Activated T-helper 2 cell treated with anti-CD3 and anti-CD28 coated beads, Interferon-gamma antibody, Interleukin-2, Interleukin-4, amounts not matched to agents 10 μg/mL and 5 μg/mL and 100 μg/mL, durations not matched to agents 14 hours and 24 hours and 36 hours (primary cell): ENCODE measurements at regions of chr12 and their contacts with region 1.

Region 1: DNA sequence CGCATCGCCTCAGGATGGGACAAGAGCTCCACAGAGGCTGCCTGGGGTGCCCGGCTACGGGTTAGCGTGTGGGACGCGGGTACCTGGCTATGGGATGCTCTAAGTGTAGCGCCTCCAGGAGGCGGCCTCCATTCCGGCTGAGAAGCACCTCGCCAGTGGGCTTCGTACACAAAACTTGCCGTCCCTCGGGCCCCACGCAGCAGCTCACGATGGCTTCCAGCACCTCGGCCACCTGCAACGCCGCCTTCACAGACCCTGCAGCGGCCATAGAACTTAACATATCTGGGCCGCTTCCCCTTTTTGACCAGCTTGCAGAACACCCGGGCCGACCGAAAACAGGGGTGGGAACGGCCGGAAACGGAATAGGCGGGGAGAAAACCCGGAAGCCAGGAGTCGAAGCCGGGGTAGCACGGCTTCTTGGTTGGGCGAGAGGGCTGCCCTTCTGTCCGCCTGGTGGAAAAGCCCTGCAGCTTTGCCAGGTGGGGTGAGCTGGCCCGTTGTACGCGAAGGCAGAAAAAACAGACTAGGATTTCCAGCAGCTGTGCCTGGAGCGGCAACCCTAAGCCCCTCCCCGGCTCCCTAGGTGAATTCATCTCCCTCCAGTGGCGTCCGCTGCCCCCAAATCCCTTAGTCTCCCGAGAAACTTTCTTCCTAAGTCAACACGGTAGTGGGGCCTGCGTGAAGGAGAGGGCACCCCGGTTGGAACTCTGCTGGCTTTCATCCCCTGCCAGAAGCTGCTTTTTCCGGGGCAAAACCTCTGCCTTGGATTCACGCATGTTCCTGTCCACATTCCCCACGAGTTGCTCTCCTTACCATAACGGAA is at the start of gene BBS10:
- DNase-seq: peak; percentile 80
- H3K4me3 Mint-ChIP-seq: peak within 1 kb of the TSS; percentile 89
- H3K27ac Mint-ChIP-seq: peak within 1 kb of the TSS; percentile 84
- H3K4me1 Mint-ChIP-seq: peaks cover 21% of the 10 kb centered on the region
- H3K27me3 Mint-ChIP-seq: no peaks in the 10 kb centered on the region
- total RNA-seq, gene BBS10: 3.9 and 4.1 TPM in 2 replicates

Region 2: GRCh38 chr12:75480469-75480949 is 867.8 kb before region 1 on chr12 and contains the start of gene GLIPR1:
- intact Hi-C with region 1: loop called (anchors 5 kb)
- DNase-seq: peak; percentile 64
- H3K4me3 Mint-ChIP-seq: peak within 1 kb of the TSS; percentile 87
- H3K27ac Mint-ChIP-seq: peak within 1 kb of the TSS; percentile 92
- H3K4me1 Mint-ChIP-seq: peaks cover 73% of the 10 kb centered on the region
- H3K27me3 Mint-ChIP-seq: peaks cover 1% of the 10 kb centered on the region
- total RNA-seq, gene GLIPR1: 7.4 and 7.6 TPM in 2 replicates

Region 3: GRCh38 chr12:75933101-75933500 is 415.2 kb before region 1 on chr12:
- intact Hi-C with region 1: loop called (anchors 10 kb)
- DNase-seq: no peak
- H3K4me3 Mint-ChIP-seq: no peak overlapping the region
- H3K27ac Mint-ChIP-seq: peak overlapping the region; percentile 73
- H3K4me1 Mint-ChIP-seq: peaks cover 44% of the 10 kb centered on the region
- H3K27me3 Mint-ChIP-seq: no peaks in the 10 kb centered on the region

Region 4: DNA sequence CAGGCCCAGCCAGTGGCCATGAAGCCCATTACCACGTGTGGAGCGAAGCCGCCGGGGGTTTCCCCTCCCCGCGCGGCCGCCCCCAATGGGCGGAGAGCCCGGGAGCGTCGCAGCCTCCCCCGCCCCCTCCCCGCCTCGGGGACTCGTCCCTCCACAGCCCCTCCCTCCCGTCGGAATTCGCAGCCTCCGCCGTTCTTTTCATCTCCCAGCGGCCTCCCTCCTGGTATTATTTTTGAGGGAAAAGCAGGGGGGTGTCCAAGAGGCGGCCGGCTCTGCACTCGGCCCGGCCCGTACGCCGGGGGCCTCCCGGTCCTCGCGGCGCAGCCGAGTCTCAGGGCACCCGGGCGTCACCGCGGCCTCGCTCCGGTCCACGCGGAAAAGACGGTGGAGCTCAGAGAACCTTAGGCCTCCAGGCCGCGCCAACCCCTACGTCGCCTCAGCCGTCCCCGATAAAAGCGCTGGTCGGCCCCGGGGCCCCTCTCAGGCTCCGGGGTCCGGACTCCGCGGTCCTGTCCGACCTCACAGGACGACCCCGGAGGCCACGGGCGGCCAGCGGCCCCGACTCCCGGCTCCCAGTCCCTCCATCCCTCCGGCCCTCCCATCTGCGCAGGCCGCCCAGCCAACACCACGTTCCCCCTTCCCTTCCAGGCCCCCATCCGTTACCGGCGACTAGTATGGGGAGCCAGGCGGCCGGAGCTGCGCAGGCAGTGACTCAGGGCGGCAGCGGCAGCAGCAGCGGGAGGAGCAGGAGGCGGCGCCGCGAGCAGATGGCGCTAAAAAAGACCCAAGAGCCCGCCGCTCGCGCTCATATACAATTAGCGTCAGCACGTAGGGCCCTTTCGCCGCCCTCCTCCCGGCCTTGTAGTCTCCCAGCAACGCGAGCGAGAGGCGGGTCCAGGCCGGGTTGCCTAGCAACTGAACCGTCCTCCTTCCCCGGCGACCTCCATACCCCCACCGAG is 264.1 kb before region 1 on chr12 and contains the start of gene NAP1L1:
- intact Hi-C with region 1: loop called (anchors 1 kb)
- DNase-seq: peak; percentile 96
- H3K4me3 Mint-ChIP-seq: peak within 1 kb of the TSS; percentile 94
- H3K27ac Mint-ChIP-seq: peak within 1 kb of the TSS; percentile 99
- H3K4me1 Mint-ChIP-seq: peaks cover 44% of the 10 kb centered on the region
- H3K27me3 Mint-ChIP-seq: no peaks in the 10 kb centered on the region
- total RNA-seq, gene NAP1L1: 701 and 744 TPM in 2 replicates

Region 5: DNA sequence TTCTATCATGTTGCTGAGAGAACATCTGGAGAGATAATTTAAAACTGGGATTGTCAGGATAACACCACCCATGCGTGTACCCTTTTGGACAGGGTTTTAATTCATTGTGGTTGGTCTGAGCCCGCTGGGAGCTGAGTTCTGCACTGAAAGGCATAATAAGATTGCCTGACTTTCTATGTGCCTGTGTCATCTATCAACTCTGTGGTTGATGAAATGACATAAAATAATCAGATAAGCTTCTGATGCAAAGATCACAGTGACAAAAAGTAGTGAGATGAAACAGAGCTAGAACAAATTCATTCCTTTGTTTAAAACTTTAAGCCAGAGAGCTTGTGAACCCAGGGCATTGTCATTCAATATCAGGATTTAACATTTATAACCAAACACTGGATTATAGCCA is 98.8 kb before region 1 on chr12:
- intact Hi-C with region 1: loop called (anchors 2 kb)
- DNase-seq: no peak
- H3K4me3 Mint-ChIP-seq: no peak overlapping the region
- H3K27ac Mint-ChIP-seq: no peak overlapping the region
- H3K4me1 Mint-ChIP-seq: peaks cover 15% of the 10 kb centered on the region
- H3K27me3 Mint-ChIP-seq: peaks cover 36% of the 10 kb centered on the region

Region 6: GRCh38 chr12:76533331-76533730 is 185.0 kb after region 1 on chr12:
- intact Hi-C with region 1: no loop called
- DNase-seq: no peak
- H3K4me3 Mint-ChIP-seq: no peak overlapping the region
- H3K27ac Mint-ChIP-seq: no peak overlapping the region
- H3K4me1 Mint-ChIP-seq: peaks cover 23% of the 10 kb centered on the region
- H3K27me3 Mint-ChIP-seq: no peaks in the 10 kb centered on the region

Region 7: DNA sequence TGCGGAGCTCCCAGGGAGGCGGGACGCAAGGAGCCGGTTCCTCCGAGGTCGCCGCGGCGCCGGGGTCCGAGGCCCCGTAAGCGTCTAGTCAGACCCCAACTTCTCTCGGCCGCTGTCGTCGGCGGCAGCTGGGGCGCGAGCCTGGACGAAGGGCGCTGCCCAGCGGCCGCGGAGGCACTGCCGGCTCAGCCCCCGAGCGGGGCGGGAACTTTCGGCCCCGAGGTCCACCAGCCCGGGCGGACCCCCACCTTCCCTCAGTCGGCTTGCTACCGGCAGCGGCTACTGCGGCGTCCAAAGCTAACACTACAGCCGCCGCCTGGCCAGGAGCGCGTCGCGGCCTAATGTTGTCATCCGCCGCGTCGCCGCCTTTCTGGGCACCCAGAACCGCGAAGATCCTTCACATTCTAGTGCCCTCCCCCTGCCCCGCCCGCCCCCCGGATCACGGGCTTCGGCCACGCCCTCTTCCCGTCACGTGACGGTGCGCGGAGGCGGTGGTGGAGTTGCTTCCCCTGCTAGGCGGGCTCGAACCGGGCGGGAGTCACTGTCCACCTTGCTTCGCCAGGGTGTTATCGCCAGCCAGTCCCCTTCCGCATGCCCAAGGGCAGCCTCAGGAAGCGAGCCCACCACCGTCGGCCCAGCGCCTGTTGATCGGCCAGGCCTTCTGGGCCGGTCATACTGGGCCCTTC is 211.3 kb after region 1 on chr12 and contains the start of gene OSBPL8:
- intact Hi-C with region 1: loop called (anchors 1 kb)
- DNase-seq: peak; percentile 89
- H3K4me3 Mint-ChIP-seq: peak within 1 kb of the TSS; percentile 93
- H3K27ac Mint-ChIP-seq: peak within 1 kb of the TSS; percentile 96
- H3K4me1 Mint-ChIP-seq: peaks cover 39% of the 10 kb centered on the region
- H3K27me3 Mint-ChIP-seq: no peaks in the 10 kb centered on the region
- total RNA-seq, gene OSBPL8: 87.9 TPM in 2 replicates